HepG2 (cell line): ENCODE measurements at regions of chr20 and their contacts with region 1.

Region 1: DNA sequence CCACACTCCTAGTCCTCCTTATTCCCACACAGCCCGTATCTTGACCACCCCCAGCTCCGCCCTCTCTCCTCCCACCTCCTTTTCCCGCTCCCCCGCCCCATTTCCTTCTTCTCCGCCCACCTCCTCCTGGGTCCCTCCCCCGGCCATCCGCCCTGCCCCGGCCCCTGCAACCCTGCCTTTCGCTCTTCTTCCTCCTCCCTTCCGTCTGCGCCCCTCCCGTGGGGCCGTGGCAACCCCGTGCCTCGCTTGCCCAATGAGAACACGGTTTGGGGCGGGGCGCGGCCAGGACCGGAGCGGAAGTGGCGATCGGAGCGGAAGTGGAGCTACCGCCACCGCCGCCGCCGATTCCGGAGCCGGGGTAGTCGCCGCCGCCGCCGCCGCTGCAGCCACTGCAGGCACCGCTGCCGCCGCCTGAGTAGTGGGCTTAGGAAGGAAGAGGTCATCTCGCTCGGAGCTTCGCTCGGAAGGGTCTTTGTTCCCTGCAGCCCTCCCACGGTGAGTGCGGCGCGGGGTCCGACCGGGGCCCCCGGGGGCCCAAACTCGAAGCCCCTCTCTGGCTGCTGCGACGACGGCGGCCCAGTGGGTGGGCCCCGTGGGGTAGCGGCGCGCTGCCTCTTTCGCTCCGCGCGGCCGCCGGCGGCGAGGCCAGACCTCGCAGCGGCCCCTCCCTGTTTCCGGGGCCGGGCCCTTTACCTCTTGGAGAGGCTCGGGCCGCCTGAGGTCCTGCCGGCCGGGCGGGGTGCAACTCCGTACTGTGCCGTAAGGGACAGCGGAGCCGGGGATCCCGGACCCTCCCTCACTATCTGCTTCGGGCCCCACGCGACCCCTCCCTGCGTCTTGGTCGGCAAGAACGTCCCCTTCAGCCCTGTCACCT is at the start of gene YWHAB:
- DNase-seq: peak; percentile 98
- ATAC-seq: peak; percentile 96
- H3K4me3 ChIP-seq: peak within 1 kb of the TSS; percentile 88 to 97 (median 92)
- H3K27ac ChIP-seq: peak within 1 kb of the TSS; percentile 91
- H3K4me1 ChIP-seq: peaks cover 60% of the 10 kb centered on the region
- H3K27me3 ChIP-seq: no peaks in the 10 kb centered on the region; a peak in 1 of 5 replicates
- CTCF ChIP-seq: peak; percentile 24
- EP300 ChIP-seq: peak in 1 of 2 experiments; percentile 66; a peak in 2 of 4 replicates
- POLR2A ChIP-seq: peak; percentile 64 to 75
- RAD21 ChIP-seq: peak; percentile 68
- total RNA-seq, gene YWHAB: 121 and 184 TPM in 2 replicates

Region 2: DNA sequence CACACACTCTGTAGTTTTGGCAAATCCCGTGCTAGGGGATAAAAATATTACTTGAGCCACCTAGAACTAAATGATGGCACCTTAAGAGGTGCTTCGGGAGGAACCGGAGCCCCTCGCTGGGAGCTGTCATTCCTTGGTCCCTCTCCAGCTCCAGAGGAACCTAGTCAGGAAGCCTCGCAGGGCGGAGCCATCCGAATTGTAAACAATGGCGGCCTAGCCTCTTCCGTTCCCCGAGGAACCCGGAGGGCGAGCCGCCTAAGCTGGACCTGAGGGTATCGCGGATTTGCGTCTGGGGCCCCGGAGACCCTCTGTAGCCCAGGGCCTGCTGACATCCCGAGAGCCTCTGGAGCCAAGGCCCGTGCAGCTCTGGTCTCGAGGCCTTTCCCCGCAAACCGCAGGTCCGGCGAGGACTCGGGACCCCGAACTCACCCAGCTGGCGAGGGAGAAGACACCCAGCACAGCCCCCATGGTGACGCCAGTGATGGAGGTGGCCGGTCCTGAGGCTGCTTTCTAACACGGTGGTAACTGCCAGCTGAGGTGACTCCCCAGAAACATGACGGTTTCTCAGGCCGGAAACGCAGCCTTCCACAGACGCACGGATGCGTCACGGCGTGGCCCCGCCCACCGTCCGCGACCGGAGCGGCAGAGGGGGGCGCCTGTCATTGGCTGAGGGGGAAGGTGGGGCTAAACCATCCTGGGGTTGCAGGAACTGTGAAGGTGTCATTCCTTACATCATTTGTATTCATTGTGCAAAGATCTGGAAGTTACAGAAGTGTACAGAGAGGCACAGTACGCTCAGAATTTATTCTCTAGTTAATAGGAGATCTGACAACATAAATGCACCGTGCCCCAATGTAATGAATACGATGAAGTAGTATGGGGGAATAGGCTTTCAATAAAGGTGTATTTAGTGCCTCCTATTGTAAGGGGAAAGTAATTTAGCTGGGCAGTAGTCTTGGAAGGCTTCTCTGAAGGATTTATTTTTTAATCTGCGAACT is 363.8 kb before region 1 on chr20 and contains the start of gene SERINC3:
- CTCF ChIA-PET with region 1: no interaction called
- POLR2A ChIA-PET with region 1: no interaction called
- in situ Hi-C with region 1: no loop called
- intact Hi-C with region 1: no loop called
- DNase-seq: peak; percentile 94
- ATAC-seq: peak; percentile 99
- H3K4me3 ChIP-seq: peak within 1 kb of the TSS; percentile 85 to 96 (median 89)
- H3K27ac ChIP-seq: peak within 1 kb of the TSS; percentile 84
- H3K4me1 ChIP-seq: peaks cover 77% of the 10 kb centered on the region
- H3K27me3 ChIP-seq: peaks cover 0 to 7% of the 10 kb centered on the region in 2 experiments; a peak in 1 of 5 replicates
- CTCF ChIP-seq: peak; percentile 6
- EP300 ChIP-seq: no peak; a peak in 2 of 4 replicates
- POLR2A ChIP-seq: peak; percentile 79 to 94
- RAD21 ChIP-seq: peak; percentile 56
- total RNA-seq, gene SERINC3: 53.5 and 82.0 TPM in 2 replicates

Region 3: DNA sequence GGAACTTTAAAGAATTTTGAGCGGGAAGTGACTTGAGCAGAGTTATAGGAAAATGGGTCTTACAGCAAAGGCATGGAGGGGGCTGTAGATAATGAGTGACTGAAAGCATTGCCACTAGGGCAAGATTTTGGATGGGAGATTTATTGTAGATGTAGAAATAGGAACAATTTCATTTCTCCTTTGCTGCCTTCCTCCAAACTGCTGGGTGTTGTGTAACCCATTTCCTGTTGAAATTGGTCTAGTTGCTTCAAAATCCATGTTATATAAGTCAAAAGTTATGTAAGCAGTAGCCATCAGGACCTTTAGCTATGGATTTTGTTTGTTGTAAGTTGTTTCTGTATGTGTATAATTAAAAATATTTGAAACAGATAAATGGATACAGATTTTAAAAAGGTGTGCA is 11.0 kb after region 1 on chr20:
- CTCF ChIA-PET with region 1: no interaction called
- POLR2A ChIA-PET with region 1: interaction called, 22 read pairs
- in situ Hi-C with region 1: no loop called
- intact Hi-C with region 1: no loop called
- DNase-seq: peak; percentile 35
- ATAC-seq: no peak; the same call in 2 of the 3 replicates
- H3K4me3 ChIP-seq: no peak overlapping the region
- H3K27ac ChIP-seq: no peak overlapping the region
- H3K4me1 ChIP-seq: peaks cover 47% of the 10 kb centered on the region
- H3K27me3 ChIP-seq: no peaks in the 10 kb centered on the region
- CTCF ChIP-seq: no peak
- EP300 ChIP-seq: peak in 1 of 2 experiments; percentile 60; a peak in 1 of 4 replicates
- POLR2A ChIP-seq: no peak
- RAD21 ChIP-seq: no peak

Region 4: GRCh38 chr20:44952736-44953135 is 67.1 kb after region 1 on chr20:
- CTCF ChIA-PET with region 1: no interaction called
- POLR2A ChIA-PET with region 1: no interaction called
- in situ Hi-C with region 1: no loop called
- intact Hi-C with region 1: no loop called
- DNase-seq: no peak
- ATAC-seq: no peak
- H3K4me3 ChIP-seq: no peak overlapping the region
- H3K27ac ChIP-seq: no peak overlapping the region
- H3K4me1 ChIP-seq: peaks cover 10% of the 10 kb centered on the region
- H3K27me3 ChIP-seq: no peaks in the 10 kb centered on the region
- CTCF ChIP-seq: no peak
- EP300 ChIP-seq: no peak
- POLR2A ChIP-seq: no peak
- RAD21 ChIP-seq: no peak

Region 5: DNA sequence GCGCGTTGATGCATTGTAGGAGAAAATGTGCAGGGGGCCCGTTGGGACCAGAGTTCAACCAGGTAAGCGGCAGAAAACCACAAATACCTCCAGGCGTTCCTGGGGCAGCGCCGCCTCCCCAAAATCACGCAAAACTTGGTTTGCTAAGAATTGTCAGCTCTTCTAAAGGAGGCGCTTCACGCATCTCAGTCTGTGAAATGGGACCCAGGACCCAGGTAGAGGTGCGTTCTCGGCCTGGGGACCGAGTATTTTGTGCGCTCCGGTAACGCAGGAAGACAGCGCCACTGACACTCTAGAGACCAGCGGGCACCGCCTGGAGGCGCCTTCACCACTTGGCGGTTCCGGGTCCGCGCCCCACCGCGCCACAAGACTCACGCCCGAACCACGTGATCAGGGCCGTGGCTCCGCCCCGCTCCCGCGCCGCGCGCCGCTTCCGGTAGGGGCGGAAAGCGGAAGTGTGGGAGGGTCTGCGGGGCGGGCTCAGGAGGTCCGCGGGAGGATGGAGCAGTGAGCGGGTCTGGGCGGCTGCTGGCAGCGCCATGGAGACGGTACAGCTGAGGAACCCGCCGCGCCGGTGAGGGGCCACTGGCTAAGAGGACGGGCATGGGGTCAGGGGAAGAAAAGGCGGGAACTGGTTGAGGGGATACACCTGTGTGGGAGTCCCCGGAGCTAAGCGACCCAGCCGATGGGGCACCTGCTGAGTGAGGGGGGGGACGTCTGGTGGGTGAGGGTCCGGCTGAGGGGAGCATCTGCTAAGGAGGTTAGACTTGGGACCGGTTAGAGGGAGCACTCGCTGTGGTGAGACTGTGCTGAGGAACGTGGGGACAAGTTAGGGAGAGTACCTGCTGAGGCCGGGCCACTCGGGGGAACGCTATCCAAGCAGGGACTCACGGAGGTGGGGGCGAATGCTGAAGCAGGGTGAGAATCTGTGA is 80.7 kb after region 1 on chr20 and contains the start of gene STK4:
- CTCF ChIA-PET with region 1: no interaction called
- POLR2A ChIA-PET with region 1: interaction called, 8 read pairs
- in situ Hi-C with region 1: no loop called
- intact Hi-C with region 1: loop called (anchors 2 kb)
- DNase-seq: peak; percentile 96
- ATAC-seq: peak; percentile 95
- H3K4me3 ChIP-seq: peak within 1 kb of the TSS; percentile 83 to 100 (median 87)
- H3K27ac ChIP-seq: peak within 1 kb of the TSS; percentile 81
- H3K4me1 ChIP-seq: peaks cover 68% of the 10 kb centered on the region
- H3K27me3 ChIP-seq: peaks cover 0 to 4% of the 10 kb centered on the region in 2 experiments; a peak in 1 of 5 replicates
- CTCF ChIP-seq: peak; percentile 95
- EP300 ChIP-seq: peak; percentile 11 to 61; a peak in 2 of 4 replicates
- POLR2A ChIP-seq: peak; percentile 96 to 98
- RAD21 ChIP-seq: no peak; the same call in none of the 2 replicates
- total RNA-seq, gene STK4: 38.3 and 61.4 TPM in 2 replicates